ENCODE measurements at regions of chr12 and their contacts with region 1.

Region 1: DNA sequence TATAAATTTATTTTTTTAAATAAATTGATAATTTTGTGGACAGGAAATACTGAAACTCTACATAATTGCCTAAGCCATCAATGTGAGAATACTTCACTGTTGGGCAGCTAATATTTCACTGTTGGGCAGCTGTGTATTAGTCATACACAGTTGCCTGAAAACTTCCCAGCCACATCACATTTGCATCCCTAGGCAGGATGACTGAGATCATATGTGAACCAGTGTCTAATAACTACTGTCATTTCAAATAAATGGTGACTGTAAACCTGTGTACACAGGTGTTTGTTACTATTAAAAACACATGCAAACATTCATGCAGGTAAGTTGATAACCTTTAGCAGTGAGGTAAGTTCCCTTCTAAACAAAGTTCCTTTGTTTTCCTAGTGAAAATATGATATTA is 43.9 kb downstream of the TMTC3 start:
- DNase-seq: peak; percentile 35 to 56
- H3K4me3 ChIP-seq: no peak overlapping the region
- H3K4me3 Mint-ChIP-seq: no peak overlapping the region
- H3K27ac Mint-ChIP-seq: peak overlapping the region; percentile 26
- H3K4me1 ChIP-seq: peaks cover 74% of the 10 kb centered on the region
- H3K4me1 Mint-ChIP-seq: peaks cover 42% of the 10 kb centered on the region
- H3K27me3 ChIP-seq: no peaks in the 10 kb centered on the region
- H3K27me3 Mint-ChIP-seq: no peaks in the 10 kb centered on the region
- CTCF ChIP-seq: no peak

Region 2: GRCh38 chr12:88092771-88093170 is 93.2 kb before region 1 on chr12:
- CTCF ChIA-PET with region 1: no interaction called
- POLR2A ChIA-PET with region 1: no interaction called
- intact Hi-C with region 1: no loop called
- DNase-seq: no peak
- H3K4me3 ChIP-seq: no peak overlapping the region
- H3K4me3 Mint-ChIP-seq: no peak overlapping the region
- H3K27ac Mint-ChIP-seq: no peak overlapping the region
- H3K4me1 ChIP-seq: no peaks in the 10 kb centered on the region
- H3K4me1 Mint-ChIP-seq: no peaks in the 10 kb centered on the region
- H3K27me3 ChIP-seq: no peaks in the 10 kb centered on the region
- H3K27me3 Mint-ChIP-seq: no peaks in the 10 kb centered on the region
- CTCF ChIP-seq: no peak

Region 3: DNA sequence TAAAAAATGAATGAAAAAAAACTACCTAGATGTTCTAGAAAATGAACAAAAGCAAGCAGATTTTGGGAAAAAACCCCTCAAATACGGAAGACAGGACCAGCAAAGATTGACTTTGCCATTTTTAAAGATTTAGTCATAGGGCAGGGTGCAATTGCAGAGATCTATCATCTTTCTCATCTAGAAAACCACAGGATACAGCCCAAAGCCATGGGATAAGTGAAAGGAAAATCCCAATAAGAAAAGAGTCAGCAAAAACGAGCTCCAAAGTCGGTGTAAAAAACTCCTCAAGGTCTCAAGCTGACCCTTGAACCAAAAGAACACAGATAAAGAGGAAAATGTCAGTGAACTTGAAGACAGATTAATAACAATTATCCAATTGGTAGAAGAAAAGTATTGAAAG is 72.1 kb before region 1 on chr12:
- CTCF ChIA-PET with region 1: no interaction called
- POLR2A ChIA-PET with region 1: no interaction called
- intact Hi-C with region 1: no loop called
- DNase-seq: no peak
- H3K4me3 ChIP-seq: no peak overlapping the region
- H3K4me3 Mint-ChIP-seq: no peak overlapping the region
- H3K27ac Mint-ChIP-seq: no peak overlapping the region
- H3K4me1 ChIP-seq: peaks cover 4% of the 10 kb centered on the region; the same call in 1 of the 2 replicates
- H3K4me1 Mint-ChIP-seq: peaks cover 9% of the 10 kb centered on the region
- H3K27me3 ChIP-seq: no peaks in the 10 kb centered on the region
- H3K27me3 Mint-ChIP-seq: no peaks in the 10 kb centered on the region
- CTCF ChIP-seq: no peak

Region 4: DNA sequence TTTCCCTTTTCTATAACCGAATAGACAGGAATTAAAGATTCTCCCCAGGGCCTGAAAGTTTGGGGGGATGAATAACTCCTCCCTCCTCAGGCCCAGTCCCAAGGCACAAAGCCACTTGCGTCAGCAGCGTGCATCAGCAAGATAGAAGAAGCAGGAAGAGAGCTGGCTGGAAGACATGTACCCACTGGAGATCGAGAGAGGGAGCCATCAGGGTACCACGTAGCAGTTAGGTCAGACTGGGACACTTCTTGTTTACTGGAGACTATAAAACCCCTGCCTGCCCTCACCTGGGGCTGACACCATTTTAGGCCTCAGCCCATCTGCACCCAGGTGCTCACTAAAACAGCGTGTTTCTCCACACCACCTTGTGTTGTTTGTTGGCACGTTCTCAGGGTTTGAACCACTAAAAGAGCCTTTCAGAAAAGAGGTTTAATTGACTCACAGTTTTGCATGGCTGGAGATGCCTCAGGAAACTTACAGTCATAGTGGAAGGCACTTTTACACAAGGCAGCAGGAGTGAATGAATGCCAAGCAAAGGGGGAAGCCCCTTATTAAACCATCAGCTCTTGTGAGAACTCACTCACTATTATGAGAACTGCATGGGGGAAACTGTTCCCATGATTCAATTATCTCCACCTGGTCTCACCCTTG is 49.3 kb after region 1 on chr12:
- CTCF ChIA-PET with region 1: no interaction called
- POLR2A ChIA-PET with region 1: no interaction called
- intact Hi-C with region 1: no loop called
- DNase-seq: no peak
- H3K4me3 ChIP-seq: no peak overlapping the region
- H3K4me3 Mint-ChIP-seq: no peak overlapping the region
- H3K27ac Mint-ChIP-seq: no peak overlapping the region
- H3K4me1 ChIP-seq: no peaks in the 10 kb centered on the region
- H3K4me1 Mint-ChIP-seq: no peaks in the 10 kb centered on the region
- H3K27me3 ChIP-seq: no peaks in the 10 kb centered on the region
- H3K27me3 Mint-ChIP-seq: no peaks in the 10 kb centered on the region
- CTCF ChIP-seq: no peak

Region 5: GRCh38 chr12:88306471-88307069 is 120.6 kb after region 1 on chr12:
- CTCF ChIA-PET with region 1: no interaction called
- POLR2A ChIA-PET with region 1: no interaction called
- intact Hi-C with region 1: loop called (anchors 2 kb)
- DNase-seq: peak; percentile 40 to 41
- H3K4me3 ChIP-seq: no peak overlapping the region
- H3K4me3 Mint-ChIP-seq: peak overlapping the region; percentile 1
- H3K27ac Mint-ChIP-seq: no peak overlapping the region
- H3K4me1 ChIP-seq: peaks cover 29% of the 10 kb centered on the region
- H3K4me1 Mint-ChIP-seq: peaks cover 15% of the 10 kb centered on the region
- H3K27me3 ChIP-seq: no peaks in the 10 kb centered on the region
- H3K27me3 Mint-ChIP-seq: peaks cover 8% of the 10 kb centered on the region
- CTCF ChIP-seq: no peak

Region 6: DNA sequence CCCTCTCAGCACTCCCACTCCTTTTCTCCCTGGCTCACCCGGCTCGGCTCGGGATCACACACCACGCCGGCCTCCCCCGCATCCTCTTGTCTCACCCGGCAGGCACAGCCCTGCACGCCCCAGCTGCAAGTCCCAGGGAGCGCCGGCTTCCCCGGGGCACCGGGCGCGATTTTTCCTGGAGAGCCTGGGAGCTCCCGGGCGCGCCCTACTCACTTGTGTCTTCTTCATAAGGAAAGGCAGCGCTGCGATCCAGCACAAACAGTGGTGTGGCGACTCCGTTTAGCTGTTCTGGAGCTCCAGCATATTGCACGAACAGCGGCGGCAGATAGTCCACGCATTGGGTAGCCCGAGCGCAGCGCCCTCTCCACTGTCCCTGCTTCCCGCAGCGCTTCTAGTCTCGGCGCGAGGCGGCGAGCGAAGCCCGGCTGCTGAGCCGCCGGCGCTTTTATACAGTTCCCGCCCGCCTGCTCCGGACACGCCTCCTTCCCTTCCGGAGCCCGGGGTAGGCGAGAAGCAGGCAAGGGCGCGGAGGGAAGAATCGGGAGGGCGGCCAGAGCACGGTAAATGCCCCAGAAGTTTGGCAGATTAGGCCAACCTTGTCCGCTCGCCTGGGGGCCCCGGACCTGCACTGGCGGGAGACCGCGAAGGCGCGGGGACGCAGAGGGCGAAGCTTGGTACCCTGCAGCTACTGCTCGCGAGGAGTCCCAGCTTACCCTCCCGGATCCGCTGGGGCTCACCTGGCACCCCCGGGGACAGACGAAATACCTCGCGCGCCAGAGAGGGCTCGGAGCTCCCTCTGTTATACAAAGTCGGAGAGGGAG is 394.3 kb after region 1 on chr12 and contains the start of gene KITLG:
- CTCF ChIA-PET with region 1: no interaction called
- POLR2A ChIA-PET with region 1: no interaction called
- intact Hi-C with region 1: loop called (anchors 10 kb)
- DNase-seq: peak; percentile 90 to 94
- H3K4me3 ChIP-seq: peak within 1 kb of the TSS; percentile 74
- H3K4me3 Mint-ChIP-seq: peak within 1 kb of the TSS; percentile 86
- H3K27ac Mint-ChIP-seq: peak within 1 kb of the TSS; percentile 87
- H3K4me1 ChIP-seq: peaks cover 14% of the 10 kb centered on the region
- H3K4me1 Mint-ChIP-seq: no peaks in the 10 kb centered on the region
- H3K27me3 ChIP-seq: no peaks in the 10 kb centered on the region
- H3K27me3 Mint-ChIP-seq: no peaks in the 10 kb centered on the region
- CTCF ChIP-seq: peak in 1 of 2 experiments; percentile 43
- total RNA-seq, gene KITLG: 200 and 211 TPM in 2 replicates

Region 7: DNA sequence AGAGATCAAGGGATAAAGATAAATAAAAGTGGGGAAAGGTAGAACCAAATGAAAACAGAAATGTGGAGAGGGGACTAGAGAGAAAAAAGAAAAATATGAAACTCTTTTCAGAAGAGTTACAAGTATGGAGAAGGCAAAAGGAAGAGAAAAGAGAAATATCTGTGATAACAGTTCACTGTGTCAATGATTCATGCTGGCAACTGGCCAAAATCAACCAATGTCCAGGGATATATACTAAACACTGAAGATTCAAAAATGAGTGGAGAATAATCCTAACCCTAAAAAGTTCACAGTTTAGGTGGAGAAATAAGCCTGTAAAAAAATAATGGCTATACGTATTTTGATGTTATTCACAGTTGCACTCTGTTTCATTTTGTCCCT is 766.5 kb after region 1 on chr12:
- CTCF ChIA-PET with region 1: no interaction called
- POLR2A ChIA-PET with region 1: no interaction called
- intact Hi-C with region 1: loop called (anchors 10 kb)
- DNase-seq: no peak
- H3K4me3 ChIP-seq: no peak overlapping the region
- H3K4me3 Mint-ChIP-seq: peak overlapping the region; percentile 6
- H3K27ac Mint-ChIP-seq: peak overlapping the region; percentile 72
- H3K4me1 ChIP-seq: peaks cover 80% of the 10 kb centered on the region
- H3K4me1 Mint-ChIP-seq: peaks cover 64% of the 10 kb centered on the region
- H3K27me3 ChIP-seq: no peaks in the 10 kb centered on the region
- H3K27me3 Mint-ChIP-seq: no peaks in the 10 kb centered on the region
- CTCF ChIP-seq: no peak